ENCODE measurements at regions of chr5 and their contacts with region 1.

Region 1: GRCh38 chr5:53045263-53045662 is 56.1 kb downstream of the ITGA2 start:
- DNase-seq: peak; percentile 33
- ATAC-seq: peak; percentile 48
- H3K4me3 ChIP-seq: no peak overlapping the region
- H3K27ac ChIP-seq: no peak overlapping the region
- H3K4me1 ChIP-seq: peaks cover 3% of the 10 kb centered on the region; the same call in 1 of the 2 replicates
- H3K27me3 ChIP-seq: no peaks in the 10 kb centered on the region
- CTCF ChIP-seq: no peak
- POLR2A ChIP-seq: no peak
- RAD21 ChIP-seq: no peak

Region 2: GRCh38 chr5:53095931-53096525 is 50.8 kb after region 1 on chr5:
- CTCF ChIA-PET with region 1: no interaction called
- POLR2A ChIA-PET with region 1: no interaction called
- dilution Hi-C with region 1: no loop called
- in situ Hi-C with region 1: no loop called
- intact Hi-C with region 1: loop called (anchors 5 kb)
- DNase-seq: peak; percentile 75
- ATAC-seq: peak; percentile 52
- H3K4me3 ChIP-seq: no peak overlapping the region
- H3K27ac ChIP-seq: no peak overlapping the region
- H3K4me1 ChIP-seq: peaks cover 7% of the 10 kb centered on the region; the same call in 1 of the 2 replicates
- H3K27me3 ChIP-seq: no peaks in the 10 kb centered on the region
- CTCF ChIP-seq: peak; percentile 77
- POLR2A ChIP-seq: no peak
- RAD21 ChIP-seq: peak; percentile 70

Measured in IMR-90 (cell line).